ENCODE measurements at regions of chr16 and their contacts with region 1.

Region 1: GRCh38 chr16:4208341-4208751 is 33.5 kb downstream of the SRL start:
- DNase-seq: peak in 1 of 2 donors; percentile 59
- ATAC-seq: peak in 6 of 8 donors; percentile 4 to 36 (median 22)
- H3K4me3 ChIP-seq: no peak overlapping the region
- H3K27ac ChIP-seq: peak overlapping the region; percentile 5 to 84 (median 56)
- H3K4me1 ChIP-seq: peaks cover 30 to 87% (median 60%) of the 10 kb centered on the region in 9 donors
- H3K27me3 ChIP-seq: no peaks in the 10 kb centered on the region
- CTCF ChIP-seq: no peak

Region 2: GRCh38 chr16:4244254-4245076 is 36.1 kb after region 1 on chr16:
- intact Hi-C with region 1: loop called in 4 of 10 experiments (anchors 5 kb)
- DNase-seq: no peak
- ATAC-seq: no peak
- H3K4me3 ChIP-seq: no peak overlapping the region
- H3K27ac ChIP-seq: no peak overlapping the region
- H3K4me1 ChIP-seq: peaks cover 0 to 28% (median 0%) of the 10 kb centered on the region in 9 donors
- H3K27me3 ChIP-seq: no peaks in the 10 kb centered on the region
- CTCF ChIP-seq: no peak